ENCODE measurements at regions of chr13 and their contacts with region 1.

Region 1: GRCh38 chr13:20197361-20197834 is 4.7 kb upstream of the GJB2 start:
- DNase-seq: peak; percentile 63
- CTCF ChIP-seq: peak; percentile 63

Region 2: GRCh38 chr13:19863323-19864023 is 333.9 kb before region 1 on chr13 and contains the start of gene ZMYM5:
- in situ Hi-C with region 1: no loop called
- DNase-seq: peak; percentile 97
- CTCF ChIP-seq: no peak

Region 3: GRCh38 chr13:20294497-20294896 is 97.1 kb after region 1 on chr13:
- in situ Hi-C with region 1: no loop called
- DNase-seq: no peak
- CTCF ChIP-seq: no peak

Region 4: GRCh38 chr13:20495082-20496023 is 298.0 kb after region 1 on chr13:
- in situ Hi-C with region 1: loop called (anchors 10 kb)
- DNase-seq: peak; percentile 72
- CTCF ChIP-seq: peak; percentile 89